Heart left ventricle (tissue), 16 donors: ENCODE measurements at regions of chr2 and their contacts with region 1.

Region 1: DNA sequence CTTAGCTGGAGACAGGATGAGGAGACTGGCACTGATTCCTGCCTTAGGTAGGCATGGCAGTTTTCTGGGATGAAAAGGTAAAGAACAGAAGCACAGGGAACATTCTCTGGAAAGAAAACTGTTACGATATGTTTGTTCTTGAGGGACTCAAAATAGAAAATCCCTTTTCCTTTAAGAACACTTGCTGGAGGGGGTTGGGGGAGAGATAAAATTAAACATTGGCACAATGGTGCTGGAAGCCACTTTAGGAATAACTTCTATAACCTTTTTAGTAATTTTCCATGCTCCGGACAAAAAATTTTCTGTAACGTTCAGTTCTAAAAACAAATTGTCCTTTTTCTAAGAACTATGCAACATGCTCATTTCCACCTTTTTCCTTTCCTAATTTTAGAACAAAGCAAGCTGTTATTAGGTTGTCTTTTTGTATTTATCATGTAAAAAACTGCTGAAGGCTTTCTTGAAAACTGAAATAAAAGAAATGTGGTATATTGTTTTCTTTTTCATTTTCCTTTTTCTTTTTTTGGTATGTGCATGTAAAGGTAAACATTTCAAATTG is 343.8 kb downstream of the EPHA4 start:
- DNase-seq: peak in 1 of 5 donors; percentile 9
- ATAC-seq: peak in 3 of 4 donors; percentile 22 to 58 (median 34)
- H3K4me3 ChIP-seq: no peak overlapping the region
- H3K27ac ChIP-seq: peak overlapping the region; percentile 4 to 75 (median 44)
- H3K4me1 ChIP-seq: peaks cover 0 to 24% (median 5%) of the 10 kb centered on the region in 12 donors
- H3K27me3 ChIP-seq: no peaks in the 10 kb centered on the region
- CTCF ChIP-seq: no peak
- POLR2A ChIP-seq: no peak

Region 2: DNA sequence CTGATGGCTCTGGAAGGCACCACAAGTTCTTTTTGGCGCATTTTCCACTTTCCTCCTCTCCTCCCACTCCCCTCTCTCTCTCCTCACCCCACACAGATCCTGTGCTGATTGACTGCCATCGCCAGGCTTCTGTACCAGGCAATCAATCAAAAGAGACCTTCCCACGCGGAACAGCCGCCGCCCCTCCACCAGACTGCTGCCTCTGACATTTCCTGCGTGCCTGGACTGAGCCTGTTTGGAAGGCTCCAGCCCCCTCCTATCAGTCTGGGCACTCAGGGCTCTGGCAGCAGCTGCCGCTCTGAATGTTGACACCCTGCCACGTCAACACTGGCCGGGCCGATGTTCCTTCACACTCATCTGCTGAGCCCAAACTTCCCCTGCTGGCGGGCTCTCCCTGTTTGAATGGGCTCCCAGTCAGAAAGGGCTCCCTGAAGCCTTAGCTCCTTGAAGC is 123.9 kb before region 1 on chr2:
- intact Hi-C with region 1: loop called in 3 of 10 experiments (anchors 5 to 10 kb)
- DNase-seq: peak; percentile 83 to 91 (median 86)
- ATAC-seq: peak; percentile 98 to 99 (median 98)
- H3K4me3 ChIP-seq: peak overlapping the region in 9 of 12 donors; percentile 4 to 25 (median 17)
- H3K27ac ChIP-seq: peak overlapping the region in 11 of 12 donors; percentile 9 to 72 (median 61)
- H3K4me1 ChIP-seq: peaks cover 0 to 28% (median 16%) of the 10 kb centered on the region in 12 donors
- H3K27me3 ChIP-seq: no peaks in the 10 kb centered on the region
- CTCF ChIP-seq: peak in 11 of 12 donors; percentile 8 to 44 (median 20)
- POLR2A ChIP-seq: no peak

Region 3: DNA sequence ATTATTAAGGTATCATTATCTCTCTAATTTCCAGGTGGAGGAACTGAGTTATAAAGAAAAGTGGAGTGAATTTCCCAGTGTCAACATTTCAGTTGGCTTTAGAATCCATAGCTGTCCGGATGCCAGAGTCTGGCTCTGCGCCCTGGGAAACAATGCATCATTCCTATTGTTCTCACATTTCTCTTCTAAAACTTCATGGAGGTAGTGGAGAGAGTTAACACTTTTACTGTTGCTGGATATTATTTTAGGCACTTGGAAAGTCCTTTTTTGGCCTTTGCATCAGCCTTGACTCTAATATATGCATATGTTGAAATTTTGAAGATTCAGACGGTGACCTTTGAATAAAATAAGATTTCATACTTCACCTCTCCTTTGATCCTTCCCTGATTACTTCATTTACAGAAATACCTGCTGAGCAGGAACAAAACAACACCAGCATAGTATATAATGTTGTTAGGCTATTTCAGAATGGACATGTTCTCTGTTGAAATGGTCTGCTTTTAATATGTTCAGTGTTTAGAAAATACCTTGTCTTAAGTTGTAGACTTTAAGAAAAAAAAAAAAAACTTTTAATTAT is 195.0 kb after region 1 on chr2:
- intact Hi-C with region 1: loop called in 3 of 10 experiments (anchors 2 to 10 kb)
- DNase-seq: peak in 3 of 5 donors; percentile 35 to 41 (median 35)
- ATAC-seq: peak in 3 of 4 donors; percentile 46 to 75 (median 49)
- H3K4me3 ChIP-seq: no peak overlapping the region
- H3K27ac ChIP-seq: peak overlapping the region in 5 of 12 donors; percentile 10 to 56 (median 17)
- H3K4me1 ChIP-seq: peaks cover 0 to 17% (median 4%) of the 10 kb centered on the region in 12 donors
- H3K27me3 ChIP-seq: no peaks in the 10 kb centered on the region
- CTCF ChIP-seq: no peak
- POLR2A ChIP-seq: no peak

Region 4: GRCh38 chr2:221529943-221530652 is 301.8 kb after region 1 on chr2:
- intact Hi-C with region 1: loop called in 1 of 10 experiments (anchors 10 kb)
- DNase-seq: no peak
- ATAC-seq: peak in 2 of 4 donors; percentile 23 to 32
- H3K4me3 ChIP-seq: peak overlapping the region in 2 of 12 donors; percentile 18 to 19
- H3K27ac ChIP-seq: peak overlapping the region; percentile 3 to 83 (median 64)
- H3K4me1 ChIP-seq: peaks cover under 1 to 71% (median 38%) of the 10 kb centered on the region in 12 donors
- H3K27me3 ChIP-seq: no peaks in the 10 kb centered on the region
- CTCF ChIP-seq: no peak
- POLR2A ChIP-seq: no peak